Posterior vena cava (tissue), 2 donors: ENCODE measurements at regions of chr10 and their contacts with region 1.

Region 1: DNA sequence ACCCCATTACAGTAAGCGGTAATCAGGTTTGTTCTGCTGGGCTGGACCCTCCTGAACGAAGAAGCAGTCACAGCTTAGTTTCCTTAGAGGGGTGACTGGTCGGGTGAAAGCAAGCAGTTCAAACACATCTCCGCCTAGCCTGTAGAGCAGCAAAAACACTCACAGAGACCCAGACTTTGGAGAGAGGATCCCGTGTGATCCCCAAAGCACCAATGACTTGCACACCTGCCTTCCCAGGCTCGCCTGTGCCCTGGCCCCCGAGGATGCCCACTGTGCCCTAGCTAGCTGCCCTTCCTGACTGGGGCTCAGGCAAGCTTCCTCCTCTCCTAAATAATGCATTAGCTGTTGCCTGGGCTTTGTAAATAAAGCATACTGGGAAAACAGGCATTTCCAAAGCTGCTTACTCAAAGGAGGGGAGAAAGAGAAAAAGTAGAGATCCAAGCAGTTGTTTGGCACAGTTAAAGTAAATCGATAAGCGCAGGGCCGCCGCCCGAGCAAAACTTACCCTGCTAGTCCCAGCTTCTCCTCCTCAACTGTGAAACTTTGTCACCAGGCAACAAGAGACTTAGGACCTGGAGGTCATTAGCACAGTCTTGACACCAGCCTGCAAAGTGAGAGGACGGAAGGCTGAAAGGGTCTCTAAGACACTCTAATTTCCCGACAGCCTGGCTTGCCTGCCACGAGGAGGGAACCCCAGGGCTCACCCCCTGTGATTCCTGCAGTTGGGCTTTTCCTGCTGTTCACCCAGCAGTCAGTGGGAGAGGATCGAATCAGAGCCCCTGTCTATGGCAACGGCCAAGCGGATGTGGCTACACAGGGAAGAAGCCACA is 4.8 kb downstream of the LRRC18 start:
- DNase-seq: no peak

Region 2: DNA sequence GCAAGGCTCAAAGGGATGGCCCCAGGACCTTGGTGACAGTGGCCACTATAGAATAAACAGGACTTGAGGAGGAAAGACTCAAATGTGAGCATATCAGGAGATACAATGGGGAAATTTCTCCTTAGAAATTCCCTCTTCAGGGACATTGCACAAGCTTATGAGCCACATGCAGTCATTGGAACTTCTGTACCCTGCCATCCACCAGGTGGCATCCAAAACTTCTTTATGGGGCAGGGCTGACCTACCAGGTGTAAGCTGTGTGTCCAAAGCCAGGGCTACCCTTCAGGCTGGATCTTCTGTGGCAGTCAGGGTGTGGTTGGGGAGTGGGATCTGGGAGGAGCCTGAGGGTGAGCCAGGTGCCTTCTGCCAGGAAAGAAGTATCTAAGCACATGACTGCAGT is 41.3 kb after region 1 on chr10:
- intact Hi-C with region 1: loop called in 1 of 2 experiments (anchors 1 kb)
- DNase-seq: no peak

Region 3: GRCh38 chr10:49632406-49633317 is 697.8 kb after region 1 on chr10:
- intact Hi-C with region 1: loop called in 1 of 2 experiments (anchors 5 kb)
- DNase-seq: peak; percentile 52